Activated CD8-positive, alpha-beta T cell treated with anti-CD3 and anti-CD28 coated beads for 36 hours (primary cell): ENCODE measurements at regions of chr2 and their contacts with region 1.

Region 1: DNA sequence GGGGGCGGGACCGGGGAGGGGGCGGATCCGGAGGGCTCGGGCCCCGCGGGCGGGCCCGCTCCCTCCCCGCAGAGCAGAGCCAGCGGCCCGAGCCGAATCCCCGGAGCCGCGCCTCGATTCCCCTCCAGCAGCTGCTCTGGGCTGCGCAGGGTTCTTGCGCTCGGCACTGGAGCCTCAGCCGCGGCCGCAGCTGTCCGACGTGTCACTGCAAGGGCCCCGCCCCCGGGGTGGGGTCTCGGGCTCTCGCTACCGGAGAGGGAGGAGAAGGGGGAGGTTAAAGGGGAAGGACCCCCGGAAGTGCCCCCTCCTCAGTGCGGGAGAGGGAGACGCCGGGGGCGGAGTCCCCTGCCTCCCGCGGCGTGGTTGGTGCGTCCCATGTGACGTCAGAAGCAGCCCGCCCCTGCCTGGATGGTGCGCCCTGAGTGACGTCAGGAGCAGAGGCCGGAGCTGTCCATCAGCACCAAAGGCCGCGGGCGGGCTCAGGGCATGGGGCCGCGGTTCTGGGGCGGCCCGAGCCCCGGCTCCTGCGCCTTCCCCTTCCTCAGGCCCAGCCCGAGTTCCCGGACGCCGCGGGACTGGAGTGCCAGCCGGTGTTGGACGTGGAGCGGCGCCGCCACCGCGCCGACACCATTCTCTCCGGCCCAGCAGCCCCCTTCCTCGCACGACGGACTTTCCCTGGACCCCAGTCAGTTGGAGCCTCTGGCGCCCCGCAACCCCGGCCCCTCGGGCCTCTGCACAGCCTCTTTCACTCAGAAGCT is at the starts of genes CHPF and TMEM198:
- DNase-seq: peak; percentile 97
- ATAC-seq: peak; percentile 85
- H3K4me3 Mint-ChIP-seq: peak within 1 kb of the TSS; percentile 93
- H3K27ac Mint-ChIP-seq: peak within 1 kb of the TSS; percentile 77
- H3K4me1 Mint-ChIP-seq: peaks cover 21% of the 10 kb centered on the region
- H3K27me3 Mint-ChIP-seq: peaks cover 15% of the 10 kb centered on the region
- CTCF ChIP-seq: no peak
- total RNA-seq, gene CHPF: 16.6 to 18.4 TPM
- total RNA-seq, gene TMEM198: 2.1 to 2.2 TPM

Region 2: GRCh38 chr2:219388127-219388844 is 155.5 kb before region 1 on chr2:
- CTCF ChIA-PET with region 1: interaction called, 23 read pairs
- POLR2A ChIA-PET with region 1: no interaction called
- intact Hi-C with region 1: no loop called
- DNase-seq: peak; percentile 99
- ATAC-seq: peak; percentile 81
- H3K4me3 Mint-ChIP-seq: peak overlapping the region; percentile 72
- H3K27ac Mint-ChIP-seq: peak overlapping the region; percentile 85
- H3K4me1 Mint-ChIP-seq: peaks cover 21% of the 10 kb centered on the region
- H3K27me3 Mint-ChIP-seq: no peaks in the 10 kb centered on the region
- CTCF ChIP-seq: peak; percentile 58

Region 3: DNA sequence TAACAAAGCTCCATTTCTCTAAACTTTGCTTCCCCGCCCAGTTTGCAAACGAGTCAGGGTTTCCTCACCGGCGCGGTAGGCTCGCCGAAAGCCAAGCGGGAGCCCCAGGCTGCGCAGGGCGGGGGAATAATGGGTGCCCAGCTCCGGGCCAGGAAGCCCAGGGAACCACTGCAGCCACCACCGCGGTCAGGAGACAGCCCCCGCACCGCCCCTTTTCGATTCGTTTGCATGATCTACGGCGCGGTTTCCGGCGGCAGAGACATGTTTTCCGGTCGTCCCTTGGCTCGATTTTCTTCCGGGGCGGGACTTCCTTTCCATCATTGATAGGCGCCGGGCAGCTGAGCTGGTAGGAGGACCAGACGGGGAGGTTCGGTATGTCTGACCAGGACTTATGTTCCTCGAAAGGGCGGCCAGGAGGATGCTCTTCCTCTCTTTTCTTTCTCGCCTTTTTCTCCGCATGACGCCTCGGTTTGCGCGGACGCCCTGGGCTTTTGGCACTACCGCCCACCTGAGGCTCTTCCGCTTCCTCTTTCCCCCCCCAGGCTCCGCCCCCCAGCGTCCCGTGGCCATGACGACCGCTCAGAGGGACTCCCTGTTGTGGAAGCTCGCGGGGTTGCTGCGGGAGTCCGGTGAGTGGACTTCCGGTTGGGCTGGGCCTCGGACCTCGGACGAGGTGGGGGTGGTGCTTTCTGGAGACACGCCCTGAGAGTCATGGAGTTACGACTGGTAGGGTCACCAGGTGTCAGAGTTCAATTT is 54.0 kb after region 1 on chr2 and contains the start of gene STK11IP:
- CTCF ChIA-PET with region 1: interaction called, 10 read pairs
- POLR2A ChIA-PET with region 1: interaction called, 4 read pairs
- intact Hi-C with region 1: loop called (anchors 5 kb)
- DNase-seq: peak; percentile 97
- ATAC-seq: peak; percentile 94
- H3K4me3 Mint-ChIP-seq: peak within 1 kb of the TSS; percentile 95
- H3K27ac Mint-ChIP-seq: peak within 1 kb of the TSS; percentile 98
- H3K4me1 Mint-ChIP-seq: peaks cover 22% of the 10 kb centered on the region
- H3K27me3 Mint-ChIP-seq: no peaks in the 10 kb centered on the region
- CTCF ChIP-seq: no peak
- total RNA-seq, gene STK11IP: 26.4 to 27.5 TPM

Region 4: DNA sequence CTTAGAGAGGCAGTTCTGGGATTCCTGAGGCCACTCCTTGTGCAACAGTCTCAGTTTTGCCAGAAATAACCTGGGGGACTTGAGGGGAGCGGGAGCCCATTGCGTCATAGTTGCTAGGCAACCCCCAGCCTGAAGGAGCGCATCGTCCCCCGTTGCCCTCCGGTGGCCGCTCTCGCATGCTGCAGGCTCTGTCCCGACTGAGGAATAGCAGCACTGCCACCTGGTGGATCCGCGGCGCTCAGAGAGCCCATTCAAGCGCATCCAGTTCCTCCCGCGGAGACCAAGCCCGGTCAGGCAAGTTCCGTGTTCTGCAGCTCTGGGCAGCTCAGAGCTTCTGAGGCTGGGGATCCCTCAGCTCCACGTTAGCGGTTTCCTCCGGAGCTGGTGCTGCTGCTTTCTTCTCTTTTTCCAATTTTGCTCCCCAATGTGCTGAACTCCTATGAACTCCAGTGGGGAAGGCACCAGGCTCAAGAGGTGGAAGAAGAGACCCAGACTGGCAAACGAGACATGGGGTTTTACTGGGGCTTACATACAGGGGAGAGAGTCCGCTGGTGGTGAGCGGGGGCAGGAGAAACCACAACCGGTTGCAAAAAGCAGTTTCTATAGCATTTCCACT is 98.8 kb after region 1 on chr2:
- CTCF ChIA-PET with region 1: interaction called, 37 read pairs
- POLR2A ChIA-PET with region 1: interaction called, 3 read pairs
- intact Hi-C with region 1: loop called (anchors 1 kb)
- DNase-seq: peak; percentile 97
- ATAC-seq: peak; percentile 100
- H3K4me3 Mint-ChIP-seq: no peak overlapping the region
- H3K27ac Mint-ChIP-seq: no peak overlapping the region
- H3K4me1 Mint-ChIP-seq: peaks cover 12% of the 10 kb centered on the region
- H3K27me3 Mint-ChIP-seq: peaks cover 14% of the 10 kb centered on the region
- CTCF ChIP-seq: peak; percentile 98